ENCODE measurements at regions of chr9 and their contacts with region 1.

Region 1: DNA sequence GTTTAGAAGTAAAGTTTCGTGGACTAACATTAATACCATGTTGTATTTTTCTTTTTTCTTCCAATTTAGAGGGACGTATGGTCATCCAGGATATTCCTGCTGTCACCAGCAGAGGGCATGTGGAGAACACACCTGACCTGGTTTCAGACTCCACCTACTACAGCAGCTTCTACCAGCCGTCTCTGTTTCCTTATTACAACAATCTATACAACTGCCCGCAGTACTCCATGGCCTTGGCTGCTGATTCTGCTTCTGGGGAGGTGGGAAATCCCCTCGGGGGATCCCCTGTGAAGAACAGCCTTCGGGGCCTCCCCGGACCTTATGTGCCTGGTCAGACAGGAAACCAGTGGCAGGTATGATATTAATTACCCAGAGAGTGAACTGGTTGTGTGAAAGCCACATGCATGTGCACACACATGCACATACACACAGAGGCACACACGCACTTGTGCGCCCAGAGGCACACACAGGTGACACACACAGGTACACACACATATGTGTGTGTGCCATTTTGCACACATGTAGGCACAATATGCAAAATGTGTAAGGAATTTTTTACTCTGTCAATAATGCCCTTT is 52.4 kb downstream of the DMRT1 start:
- ATAC-seq: peak; percentile 65 to 98 (median 88)
- H3K4me3 ChIP-seq: no peak overlapping the region
- H3K27ac ChIP-seq: no peak overlapping the region
- H3K4me1 ChIP-seq: no peaks in the 10 kb centered on the region

Region 2: DNA sequence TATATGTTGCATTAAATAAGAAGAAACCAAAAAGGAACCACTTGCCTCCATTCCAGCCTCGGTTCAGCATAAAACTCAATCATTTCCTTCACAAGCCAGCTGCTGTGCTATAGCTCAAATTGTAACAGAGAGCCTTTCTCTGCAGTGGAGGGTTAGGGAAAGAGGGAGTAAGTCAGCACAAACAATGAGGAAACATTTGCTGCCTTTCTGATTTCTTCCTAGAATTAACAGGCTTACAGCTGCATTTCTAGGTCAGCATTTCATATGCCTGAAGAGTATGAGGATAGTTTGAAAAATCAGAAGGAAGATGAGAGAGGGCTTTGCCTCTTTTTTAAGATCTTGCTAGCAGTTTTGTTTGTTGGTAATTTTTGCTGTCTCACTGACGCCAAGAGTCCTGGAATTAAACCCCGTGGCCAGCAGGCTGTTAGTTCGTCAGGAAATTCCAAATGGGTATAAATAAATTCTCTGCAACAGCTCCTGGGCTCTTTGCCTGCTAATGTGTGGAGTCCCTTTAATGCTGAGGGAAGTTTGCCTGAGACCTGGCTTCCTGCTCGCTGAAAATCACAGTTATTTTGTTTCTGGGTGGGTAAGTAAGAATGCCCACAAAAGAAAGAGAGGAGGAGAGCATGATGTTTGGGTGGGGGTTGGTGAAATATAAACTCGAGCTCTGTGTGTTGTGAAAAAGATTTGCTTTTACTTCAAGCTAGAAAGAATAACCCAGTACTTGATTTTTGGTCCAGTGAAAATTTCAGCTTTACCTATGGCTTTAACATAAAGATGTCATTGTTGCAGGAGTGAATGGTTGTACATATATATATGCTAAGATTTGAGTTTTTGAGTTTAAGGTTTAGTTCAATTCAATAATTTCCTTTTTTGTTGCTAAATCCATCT is 200.5 kb before region 1 on chr9:
- in situ Hi-C with region 1: no loop called
- ATAC-seq: peak; percentile 59 to 85 (median 74)
- H3K4me3 ChIP-seq: peak overlapping the region in 1 of 5 donors; percentile 3
- H3K27ac ChIP-seq: peak overlapping the region in 1 of 2 donors; percentile 20
- H3K4me1 ChIP-seq: peaks cover 14 to 15% of the 10 kb centered on the region in 2 donors

Region 3: GRCh38 chr9:806285-807156 is 87.4 kb before region 1 on chr9:
- in situ Hi-C with region 1: no loop called
- ATAC-seq: peak in 3 of 8 experiments; percentile 21 to 49 (median 29)
- H3K4me3 ChIP-seq: no peak overlapping the region
- H3K27ac ChIP-seq: no peak overlapping the region
- H3K4me1 ChIP-seq: peaks cover 0 to 6% of the 10 kb centered on the region in 2 donors

Region 4: GRCh38 chr9:994005-994404 is 100.1 kb after region 1 on chr9:
- in situ Hi-C with region 1: loop called in 1 of 9 experiments (anchors 10 kb)
- ATAC-seq: no peak
- H3K4me3 ChIP-seq: no peak overlapping the region
- H3K27ac ChIP-seq: no peak overlapping the region
- H3K4me1 ChIP-seq: no peaks in the 10 kb centered on the region

Region 5: GRCh38 chr9:1009101-1009707 is 115.3 kb after region 1 on chr9:
- in situ Hi-C with region 1: loop called in 4 of 9 experiments (anchors 10 to 25 kb)
- ATAC-seq: peak; percentile 77 to 99 (median 97)
- H3K4me3 ChIP-seq: no peak overlapping the region
- H3K27ac ChIP-seq: no peak overlapping the region
- H3K4me1 ChIP-seq: no peaks in the 10 kb centered on the region

Region 6: GRCh38 chr9:1311462-1312042 is 417.6 kb after region 1 on chr9:
- in situ Hi-C with region 1: no loop called
- ATAC-seq: no peak
- H3K4me3 ChIP-seq: no peak overlapping the region
- H3K27ac ChIP-seq: no peak overlapping the region
- H3K4me1 ChIP-seq: no peaks in the 10 kb centered on the region